Caco-2 (cell line): ENCODE measurements at regions of chr2 and their contacts with region 1.

Region 1: DNA sequence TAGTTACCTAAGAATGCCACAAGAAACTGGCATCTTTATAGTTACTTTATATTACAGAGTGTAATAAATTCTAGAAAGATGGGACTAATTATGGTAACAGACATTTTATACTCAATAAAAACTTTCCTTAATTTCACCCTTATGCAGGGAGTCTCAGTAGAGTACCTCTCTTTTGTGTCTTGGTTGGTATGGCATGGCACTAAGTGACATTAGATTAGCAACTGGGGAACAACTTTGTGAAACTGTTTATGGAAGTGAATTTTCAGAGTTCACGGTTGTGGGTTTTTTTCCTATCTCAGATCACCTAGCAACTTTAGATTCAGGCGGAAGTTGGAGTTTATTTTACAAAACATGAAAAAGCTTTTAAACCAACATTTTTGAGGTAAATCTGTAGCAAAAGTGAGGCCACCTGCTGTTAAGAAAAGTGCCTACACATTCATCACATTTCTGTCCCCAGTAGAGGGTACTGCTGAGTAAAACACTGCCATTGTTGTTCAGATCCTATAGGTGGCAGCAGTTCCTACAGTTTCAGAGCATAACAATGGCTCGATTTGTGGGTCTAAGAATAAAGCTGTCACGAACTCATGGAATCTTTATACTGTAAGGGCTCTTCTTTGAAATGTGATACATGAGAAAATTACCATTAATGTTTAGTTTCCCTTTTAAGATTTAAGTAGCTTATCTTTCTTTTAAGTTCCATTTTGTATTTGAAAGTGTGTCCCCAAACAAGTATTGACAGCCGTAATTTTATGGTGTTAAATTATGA is 117.6 kb downstream of the CAMKMT start:
- DNase-seq: peak; percentile 54 to 79
- H3K4me3 ChIP-seq: no peak overlapping the region
- H3K4me3 Mint-ChIP-seq: no peak overlapping the region
- H3K27ac Mint-ChIP-seq: no peak overlapping the region
- H3K4me1 ChIP-seq: no peaks in the 10 kb centered on the region
- H3K4me1 Mint-ChIP-seq: no peaks in the 10 kb centered on the region
- H3K27me3 ChIP-seq: no peaks in the 10 kb centered on the region
- H3K27me3 Mint-ChIP-seq: no peaks in the 10 kb centered on the region
- CTCF ChIP-seq: peak; percentile 99 to 100

Region 2: DNA sequence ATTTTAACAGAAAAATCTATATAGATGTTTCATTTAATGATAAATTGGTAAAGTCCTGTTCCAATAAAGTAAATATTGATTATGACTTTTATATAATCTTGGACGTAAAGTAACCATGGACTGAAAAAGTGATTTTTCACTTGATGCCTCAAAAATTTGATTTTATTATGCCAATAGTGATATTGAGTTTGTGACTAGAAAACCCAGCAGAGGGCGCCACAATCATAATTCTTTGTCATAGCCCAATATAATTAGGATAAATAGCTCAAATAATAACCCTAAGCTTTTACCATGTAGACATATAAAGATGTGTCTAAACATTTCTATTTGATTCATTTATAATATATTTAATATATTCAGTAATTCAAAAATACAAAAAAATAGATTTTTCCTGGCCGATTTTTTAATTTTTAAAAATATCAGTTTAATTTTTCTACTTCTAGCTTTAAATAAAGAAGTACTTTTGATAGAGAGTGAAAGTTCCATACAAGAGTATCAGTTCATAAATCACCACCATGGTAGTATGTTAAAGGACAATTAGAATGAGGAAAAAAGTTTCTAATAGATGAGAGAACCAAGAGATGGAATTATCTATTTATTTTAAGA is 86.9 kb before region 1 on chr2:
- CTCF ChIA-PET with region 1: interaction called, 46 read pairs
- POLR2A ChIA-PET with region 1: no interaction called
- intact Hi-C with region 1: loop called (anchors 1 kb)
- DNase-seq: peak; percentile 55 to 62
- H3K4me3 ChIP-seq: no peak overlapping the region
- H3K4me3 Mint-ChIP-seq: no peak overlapping the region
- H3K27ac Mint-ChIP-seq: no peak overlapping the region
- H3K4me1 ChIP-seq: no peaks in the 10 kb centered on the region
- H3K4me1 Mint-ChIP-seq: peaks cover 7% of the 10 kb centered on the region
- H3K27me3 ChIP-seq: no peaks in the 10 kb centered on the region
- H3K27me3 Mint-ChIP-seq: no peaks in the 10 kb centered on the region
- CTCF ChIP-seq: peak; percentile 59 to 79

Region 3: GRCh38 chr2:44616667-44617155 is 137.4 kb after region 1 on chr2:
- CTCF ChIA-PET with region 1: interaction called, 4 read pairs
- POLR2A ChIA-PET with region 1: no interaction called
- intact Hi-C with region 1: loop called (anchors 5 kb)
- DNase-seq: no peak
- H3K4me3 ChIP-seq: no peak overlapping the region
- H3K4me3 Mint-ChIP-seq: no peak overlapping the region
- H3K27ac Mint-ChIP-seq: no peak overlapping the region
- H3K4me1 ChIP-seq: no peaks in the 10 kb centered on the region
- H3K4me1 Mint-ChIP-seq: peaks cover 14% of the 10 kb centered on the region
- H3K27me3 ChIP-seq: no peaks in the 10 kb centered on the region
- H3K27me3 Mint-ChIP-seq: no peaks in the 10 kb centered on the region
- CTCF ChIP-seq: no peak

Region 4: DNA sequence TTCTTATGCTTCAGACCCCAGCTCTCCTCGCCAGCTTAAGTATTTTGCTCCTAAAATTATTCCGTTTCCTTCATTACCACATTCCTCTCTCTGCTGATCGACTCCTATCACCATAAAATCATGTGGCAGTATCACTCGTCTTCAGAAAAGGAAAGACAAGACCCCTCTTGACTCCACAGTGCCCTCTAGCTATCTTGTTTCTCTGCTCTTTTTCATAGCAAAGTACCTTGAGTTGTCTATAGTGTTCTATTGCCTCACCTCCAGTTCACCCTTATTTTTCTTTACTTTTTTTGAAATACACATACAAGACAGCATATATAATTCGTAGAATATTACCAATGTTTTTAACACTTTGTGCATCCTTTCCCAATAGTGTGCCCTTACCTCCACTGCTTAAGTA is 189.0 kb after region 1 on chr2:
- CTCF ChIA-PET with region 1: interaction called, 4 read pairs
- POLR2A ChIA-PET with region 1: no interaction called
- intact Hi-C with region 1: loop called (anchors 1 kb)
- DNase-seq: peak in 1 of 2 experiments; percentile 16
- H3K4me3 ChIP-seq: no peak overlapping the region
- H3K4me3 Mint-ChIP-seq: no peak overlapping the region
- H3K27ac Mint-ChIP-seq: no peak overlapping the region
- H3K4me1 ChIP-seq: no peaks in the 10 kb centered on the region
- H3K4me1 Mint-ChIP-seq: peaks cover 6% of the 10 kb centered on the region
- H3K27me3 ChIP-seq: no peaks in the 10 kb centered on the region
- H3K27me3 Mint-ChIP-seq: no peaks in the 10 kb centered on the region
- CTCF ChIP-seq: peak; percentile 28 to 41

Region 5: DNA sequence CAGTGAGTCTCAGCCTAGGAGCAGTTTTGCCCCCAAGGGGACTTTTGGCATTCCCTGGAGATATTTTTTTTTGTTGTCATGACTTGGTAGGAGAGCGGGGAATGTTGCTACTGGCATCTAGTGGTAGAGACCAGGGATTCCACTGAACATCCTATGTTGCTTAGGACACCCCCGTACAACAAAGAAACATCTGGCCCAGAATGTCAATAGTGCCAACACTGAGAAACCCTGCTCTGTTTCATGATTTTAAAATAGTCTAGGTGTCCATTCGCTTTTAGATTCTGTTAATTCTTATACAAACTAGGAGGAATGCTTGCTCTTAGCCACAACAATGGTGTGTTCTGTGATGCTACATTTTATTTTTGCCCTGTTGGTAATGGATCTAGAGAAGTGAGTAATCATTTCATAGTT is 236.4 kb after region 1 on chr2:
- CTCF ChIA-PET with region 1: interaction called, 14 read pairs
- POLR2A ChIA-PET with region 1: no interaction called
- intact Hi-C with region 1: loop called (anchors 1 kb)
- DNase-seq: peak; percentile 44 to 55
- H3K4me3 ChIP-seq: no peak overlapping the region
- H3K4me3 Mint-ChIP-seq: no peak overlapping the region
- H3K27ac Mint-ChIP-seq: no peak overlapping the region
- H3K4me1 ChIP-seq: no peaks in the 10 kb centered on the region
- H3K4me1 Mint-ChIP-seq: no peaks in the 10 kb centered on the region
- H3K27me3 ChIP-seq: no peaks in the 10 kb centered on the region
- H3K27me3 Mint-ChIP-seq: no peaks in the 10 kb centered on the region
- CTCF ChIP-seq: peak; percentile 51 to 58

Region 6: GRCh38 chr2:44955593-44956392 is 476.5 kb after region 1 on chr2:
- CTCF ChIA-PET with region 1: interaction called, 53 read pairs
- POLR2A ChIA-PET with region 1: no interaction called
- intact Hi-C with region 1: loop called (anchors 1 kb)
- DNase-seq: peak; percentile 75 to 88
- H3K4me3 ChIP-seq: peak overlapping the region; percentile 32
- H3K4me3 Mint-ChIP-seq: peak overlapping the region; percentile 73
- H3K27ac Mint-ChIP-seq: no peak overlapping the region
- H3K4me1 ChIP-seq: no peaks in the 10 kb centered on the region
- H3K4me1 Mint-ChIP-seq: peaks cover 5% of the 10 kb centered on the region
- H3K27me3 ChIP-seq: no peaks in the 10 kb centered on the region; the same call in 1 of the 2 replicates
- H3K27me3 Mint-ChIP-seq: peaks cover 5% of the 10 kb centered on the region
- CTCF ChIP-seq: peak; percentile 89 to 90